ENCODE measurements at regions of chr3 and their contacts with region 1.

Region 1: DNA sequence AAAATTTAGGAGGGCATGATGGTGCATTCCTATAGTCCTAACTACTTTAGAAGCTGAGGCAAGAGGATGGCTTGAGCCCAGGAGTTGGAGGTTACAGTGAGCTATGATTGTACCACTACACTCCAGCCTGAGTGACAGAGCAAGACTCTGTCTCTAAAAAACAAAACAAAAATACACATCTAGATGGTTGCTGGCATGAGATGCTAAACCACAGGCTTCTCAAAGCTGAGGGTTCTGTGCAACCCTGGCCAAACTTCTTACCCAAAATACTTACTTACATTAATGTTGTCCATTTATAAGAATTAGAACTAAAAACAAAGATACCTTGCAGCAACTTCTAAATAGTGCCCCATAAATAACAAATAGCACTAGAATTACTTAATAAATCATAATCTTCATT is 14.3 kb upstream of the ARHGEF3 start:
- DNase-seq: no peak

Region 2: DNA sequence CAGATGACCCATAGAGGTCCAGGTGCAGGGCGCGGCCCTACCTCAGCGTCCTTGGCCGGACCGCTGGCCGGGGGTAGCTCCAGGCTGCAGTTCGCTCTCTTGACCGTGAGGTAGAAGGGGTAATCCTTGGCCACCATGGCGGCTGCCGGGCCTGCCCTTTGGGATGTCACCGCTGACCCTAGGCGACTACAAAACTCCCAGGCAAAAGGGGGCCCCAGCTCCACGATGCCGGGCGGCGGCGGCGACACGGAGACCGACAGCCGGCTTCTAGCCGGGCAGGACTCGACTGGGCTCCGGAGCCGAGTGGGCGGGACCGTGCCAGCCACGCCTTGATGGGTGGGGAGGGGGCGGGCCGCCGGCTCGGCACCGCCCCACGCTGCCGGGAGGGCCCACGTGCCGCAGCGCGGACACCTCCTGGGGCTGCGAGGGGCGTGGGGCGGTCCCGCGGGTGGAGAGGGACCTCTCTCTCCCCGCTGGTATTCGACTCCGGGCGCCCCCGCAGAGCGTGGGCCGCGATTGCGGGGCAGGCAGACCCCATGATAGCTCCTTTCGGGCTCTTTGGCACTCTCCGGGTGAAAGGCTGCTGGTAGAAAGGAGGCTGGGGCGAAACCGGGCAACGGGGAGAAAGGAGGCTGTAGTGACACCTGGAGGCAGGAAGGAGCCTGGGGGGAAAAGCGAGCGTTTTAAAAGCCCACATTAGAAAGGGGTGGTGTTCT is 14.2 kb before region 1 on chr3 and contains the start of gene ARHGEF3:
- intact Hi-C with region 1: loop called in 1 of 2 experiments (anchors 1 kb)
- DNase-seq: peak; percentile 96
- total RNA-seq, gene ARHGEF3: 20.3 to 24.2 TPM

Region 3: GRCh38 chr3:56837196-56837955 is 21.3 kb after region 1 on chr3:
- intact Hi-C with region 1: no loop called
- DNase-seq: no peak

Region 4: DNA sequence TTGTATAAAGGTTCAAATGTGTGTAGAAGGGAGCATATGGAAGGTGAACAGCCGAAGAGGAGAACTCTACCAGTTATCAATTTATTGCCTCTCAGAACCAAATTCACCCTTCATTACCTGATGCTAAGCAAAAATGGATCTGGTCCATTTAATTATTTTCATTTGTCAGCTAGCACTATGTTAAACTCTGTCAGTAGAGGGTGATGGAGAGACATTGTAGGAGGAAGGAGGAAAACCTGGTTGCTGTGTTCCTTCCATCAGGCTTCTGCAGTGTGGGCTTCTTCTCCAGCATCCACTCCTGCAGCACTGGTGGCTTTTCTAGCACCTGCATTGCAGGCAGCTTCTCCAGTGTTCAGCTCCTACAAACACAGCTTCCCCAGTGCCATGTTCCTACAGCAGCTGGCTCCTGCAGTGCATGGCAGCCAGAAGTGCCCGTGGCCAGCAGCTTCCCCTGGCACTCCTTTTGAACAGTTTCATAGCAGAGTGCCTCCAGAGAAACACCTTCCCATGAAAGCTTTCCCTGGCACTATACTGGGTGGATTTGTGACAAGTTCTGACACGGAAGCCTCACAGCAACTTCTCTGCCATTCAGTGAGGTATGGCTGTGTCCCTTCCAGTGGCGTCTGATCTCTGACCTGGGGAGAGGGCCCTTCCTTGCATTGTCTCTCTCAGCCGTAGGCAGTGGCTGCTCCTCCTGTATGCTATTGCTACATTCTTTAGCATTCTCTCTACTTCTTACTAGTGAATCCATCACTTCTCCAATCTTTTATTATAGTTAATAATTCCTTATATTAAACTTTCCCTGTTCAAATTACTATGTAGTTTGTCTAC is 363.7 kb after region 1 on chr3:
- intact Hi-C with region 1: no loop called
- DNase-seq: no peak

Region 5: DNA sequence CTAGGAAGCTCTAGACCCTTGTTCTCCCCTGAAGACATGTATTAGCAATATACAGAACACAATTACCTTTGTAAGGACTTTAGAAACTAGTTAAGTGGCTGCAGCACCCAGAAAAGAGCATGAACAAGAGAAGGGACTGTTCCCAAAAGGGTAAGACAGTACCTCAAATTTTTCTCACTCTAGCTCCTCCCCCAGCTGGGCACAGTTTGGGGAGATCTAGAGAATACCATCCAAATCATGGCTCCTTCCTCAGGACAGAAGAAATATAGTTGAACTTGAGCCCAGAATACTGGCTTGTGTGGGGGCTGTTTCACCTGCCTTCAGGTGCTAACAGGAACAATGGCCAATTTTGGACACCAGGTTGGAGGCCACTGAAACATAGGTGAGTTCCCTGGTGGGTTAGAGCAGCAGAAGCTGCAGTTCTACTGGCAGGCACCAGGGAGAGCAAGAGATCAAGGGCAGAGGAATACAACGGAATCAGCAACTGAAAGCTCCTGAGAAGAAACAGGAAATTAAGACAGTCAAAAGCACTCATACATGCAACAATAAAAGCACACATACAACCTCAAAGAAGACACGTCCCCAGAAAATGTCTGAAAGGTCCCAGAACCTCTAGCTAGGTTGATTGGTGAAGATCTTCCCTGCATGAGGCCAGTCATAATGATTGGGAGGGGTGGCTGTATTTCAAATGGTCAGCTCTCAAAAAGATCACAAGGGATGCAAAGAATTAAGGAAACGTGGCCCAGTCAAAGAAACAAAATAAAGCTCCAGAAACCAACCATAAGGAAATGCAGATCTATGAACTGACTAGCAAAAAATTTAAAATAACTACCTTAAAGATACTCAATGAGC is 581.3 kb after region 1 on chr3:
- intact Hi-C with region 1: no loop called
- DNase-seq: no peak

Measured in posterior vena cava (tissue), 2 donors.